Heart right ventricle (tissue), 16 donors: ENCODE measurements at regions of chr9 and their contacts with region 1.

Region 1: GRCh38 chr9:110283751-110284150 is 27.4 kb upstream of the TXN start:
- DNase-seq: no peak
- ATAC-seq: no peak
- H3K4me3 ChIP-seq: no peak overlapping the region
- H3K27ac ChIP-seq: no peak overlapping the region
- H3K4me1 ChIP-seq: peaks cover 0 to 8% (median 0%) of the 10 kb centered on the region in 9 donors
- H3K27me3 ChIP-seq: peaks cover 0 to 6% (median 0%) of the 10 kb centered on the region in 7 donors
- CTCF ChIP-seq: no peak

Region 2: GRCh38 chr9:110623462-110624025 is 339.8 kb after region 1 on chr9:
- intact Hi-C with region 1: no loop called
- DNase-seq: peak in 1 of 2 donors; percentile 51
- ATAC-seq: peak in 2 of 8 donors; percentile 21 to 47
- H3K4me3 ChIP-seq: no peak overlapping the region
- H3K27ac ChIP-seq: no peak overlapping the region
- H3K4me1 ChIP-seq: no peaks in the 10 kb centered on the region
- H3K27me3 ChIP-seq: no peaks in the 10 kb centered on the region
- CTCF ChIP-seq: peak; percentile 44 to 78 (median 69)

Region 3: GRCh38 chr9:110650991-110651411 is 367.2 kb after region 1 on chr9:
- intact Hi-C with region 1: no loop called
- DNase-seq: no peak
- ATAC-seq: peak in 6 of 8 donors; percentile 28 to 62 (median 52)
- H3K4me3 ChIP-seq: no peak overlapping the region
- H3K27ac ChIP-seq: peak overlapping the region in 5 of 10 donors; percentile 17 to 38 (median 23)
- H3K4me1 ChIP-seq: peaks cover 0 to 9% (median 0%) of the 10 kb centered on the region in 9 donors
- H3K27me3 ChIP-seq: no peaks in the 10 kb centered on the region
- CTCF ChIP-seq: no peak

Region 4: GRCh38 chr9:110728058-110728457 is 444.3 kb after region 1 on chr9:
- intact Hi-C with region 1: no loop called
- DNase-seq: no peak
- ATAC-seq: no peak
- H3K4me3 ChIP-seq: no peak overlapping the region
- H3K27ac ChIP-seq: no peak overlapping the region
- H3K4me1 ChIP-seq: no peaks in the 10 kb centered on the region
- H3K27me3 ChIP-seq: no peaks in the 10 kb centered on the region
- CTCF ChIP-seq: no peak

Region 5: GRCh38 chr9:111131211-111131610 is 847.5 kb after region 1 on chr9:
- intact Hi-C with region 1: loop called in 1 of 10 experiments (anchors 5 kb)
- DNase-seq: no peak
- ATAC-seq: no peak
- H3K4me3 ChIP-seq: no peak overlapping the region
- H3K27ac ChIP-seq: no peak overlapping the region
- H3K4me1 ChIP-seq: no peaks in the 10 kb centered on the region
- H3K27me3 ChIP-seq: no peaks in the 10 kb centered on the region
- CTCF ChIP-seq: no peak